Left cardiac atrium (tissue), 4 donors: ENCODE measurements at regions of chr9 and their contacts with region 1.

Region 1: DNA sequence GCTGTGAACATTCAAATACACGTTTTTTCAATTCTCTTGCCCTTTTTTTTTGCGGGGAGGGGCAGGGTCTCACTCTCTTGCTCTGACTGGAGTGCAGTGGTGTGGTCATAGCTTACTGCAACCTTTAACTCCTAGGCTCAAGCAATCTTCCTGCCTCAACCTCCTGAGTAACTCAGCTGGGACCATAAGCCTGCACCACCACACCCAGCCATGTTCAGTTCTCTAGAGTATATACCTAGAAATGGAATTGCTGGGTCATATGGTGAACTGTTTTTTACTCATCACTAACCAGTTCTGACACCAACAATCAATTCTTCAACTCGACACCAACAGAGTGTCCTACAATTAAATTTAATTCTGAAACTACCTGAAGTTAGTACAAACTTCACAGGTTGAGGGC is 85.5 kb upstream of the ZNF169 start:
- DNase-seq: no peak
- ATAC-seq: peak in 1 of 2 donors; percentile 26

Region 2: DNA sequence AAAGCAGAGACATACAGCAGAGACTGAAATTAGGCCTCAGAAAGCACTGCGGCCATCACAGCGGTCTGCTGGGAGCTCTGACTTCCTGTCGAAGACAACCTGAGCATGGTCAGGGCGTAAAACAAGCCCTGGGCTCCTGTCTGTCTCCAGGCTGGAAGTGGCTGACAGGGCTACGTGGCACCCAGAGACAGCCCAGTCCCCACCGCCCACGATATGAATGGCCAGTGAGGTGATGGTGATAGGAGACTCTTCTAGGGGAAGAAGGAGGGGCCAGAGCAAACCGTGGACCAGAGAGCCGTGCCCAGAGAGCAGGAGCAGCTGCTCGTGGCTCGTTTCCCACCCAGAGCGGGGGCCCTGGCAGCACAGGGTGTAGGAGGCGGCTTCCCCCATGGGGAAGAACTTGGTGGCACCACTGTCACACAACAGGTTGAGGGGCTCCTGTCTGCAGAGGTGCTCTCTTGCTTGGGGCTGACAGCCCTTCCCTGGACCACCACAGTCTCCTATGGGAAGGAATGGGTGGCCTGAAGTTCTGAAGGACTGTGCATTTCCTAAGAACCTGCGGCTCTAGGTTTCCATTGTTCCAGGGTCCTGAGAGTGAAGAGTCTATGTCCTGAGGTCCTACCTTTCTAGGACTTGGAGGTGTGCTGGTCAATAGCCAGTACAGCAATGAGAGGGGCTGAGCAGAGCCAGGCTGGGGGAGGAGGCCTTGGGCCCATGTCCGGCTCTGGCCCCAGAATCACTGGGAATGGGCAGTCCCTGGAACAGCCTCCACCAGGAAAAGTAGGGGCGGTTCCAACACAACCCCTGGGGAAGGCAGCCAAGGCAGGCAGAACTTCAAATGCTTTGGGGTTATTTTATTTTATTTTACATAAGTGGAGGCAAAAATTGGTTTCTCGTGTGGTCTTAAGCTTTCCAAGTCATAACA is 274.9 kb before region 1 on chr9:
- intact Hi-C with region 1: no loop called
- DNase-seq: peak; percentile 7
- ATAC-seq: no peak

Region 3: GRCh38 chr9:94054716-94055115 is 118.9 kb before region 1 on chr9:
- intact Hi-C with region 1: no loop called
- DNase-seq: no peak
- ATAC-seq: peak in 1 of 2 donors; percentile 45

Region 4: DNA sequence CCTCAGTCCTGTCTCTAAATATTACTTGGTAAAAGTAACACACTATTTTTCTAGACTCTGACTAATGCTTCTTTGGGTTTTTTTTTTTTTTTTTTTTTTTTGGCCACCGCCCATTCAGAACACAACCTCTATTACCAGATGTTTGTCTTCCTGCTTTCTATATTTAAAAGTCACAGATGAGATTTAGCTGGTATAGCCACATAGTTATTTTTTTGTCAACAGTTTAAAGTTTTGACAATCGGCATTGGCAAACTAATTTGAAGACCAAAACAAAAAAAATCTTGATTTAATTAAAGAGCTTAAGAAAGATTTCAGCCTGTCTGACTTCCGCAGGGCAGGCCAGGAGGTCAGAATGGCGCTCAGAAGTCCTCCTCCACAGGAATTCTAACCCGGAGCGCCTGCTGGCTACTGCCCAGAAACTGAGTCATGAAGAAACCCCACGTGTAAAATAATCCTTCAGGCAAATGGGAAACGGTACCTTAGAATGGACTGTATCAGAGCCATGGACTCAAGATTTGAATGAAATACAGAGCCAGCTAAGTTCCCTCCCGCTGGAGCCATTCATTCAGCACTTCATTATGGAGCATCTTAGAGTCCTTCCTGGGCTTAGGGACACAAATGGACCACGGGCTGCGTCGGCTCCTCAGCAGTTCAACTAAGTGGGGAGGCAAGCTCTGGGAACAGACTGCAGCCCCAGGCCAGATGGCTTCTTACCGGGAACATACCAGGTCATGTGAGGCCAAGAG is 33.8 kb before region 1 on chr9:
- intact Hi-C with region 1: loop called in 1 of 2 experiments (anchors 5 kb)
- DNase-seq: peak; percentile 91
- ATAC-seq: peak; percentile 73 to 83